B cell (primary cell): ENCODE measurements at regions of chr19 and their contacts with region 1.

Region 1: GRCh38 chr19:35090506-35091237 is 25.0 kb upstream of the FXYD3 start:
- DNase-seq: peak; percentile 78
- ATAC-seq: peak; percentile 68
- H3K4me3 ChIP-seq: peak overlapping the region in 2 of 5 experiments; percentile 15 to 20
- H3K4me3 Mint-ChIP-seq: peak overlapping the region; percentile 70
- H3K27ac ChIP-seq: no peak overlapping the region
- H3K27ac Mint-ChIP-seq: no peak overlapping the region
- H3K4me1 ChIP-seq: peaks cover 50% of the 10 kb centered on the region in 2 donors
- H3K4me1 Mint-ChIP-seq: peaks cover 40% of the 10 kb centered on the region
- H3K27me3 ChIP-seq: no peaks in the 10 kb centered on the region
- H3K27me3 Mint-ChIP-seq: no peaks in the 10 kb centered on the region
- CTCF ChIP-seq: peak; percentile 82

Region 2: GRCh38 chr19:35044317-35045117 is 46.2 kb before region 1 on chr19:
- CTCF ChIA-PET with region 1: interaction called, 9 read pairs
- POLR2A ChIA-PET with region 1: no interaction called
- intact Hi-C with region 1: loop called (anchors 1 kb)
- DNase-seq: peak; percentile 63
- ATAC-seq: no peak
- H3K4me3 ChIP-seq: no peak overlapping the region
- H3K4me3 Mint-ChIP-seq: no peak overlapping the region
- H3K27ac ChIP-seq: no peak overlapping the region
- H3K27ac Mint-ChIP-seq: peak overlapping the region; percentile 32
- H3K4me1 ChIP-seq: peaks cover 27 to 35% of the 10 kb centered on the region in 2 donors
- H3K4me1 Mint-ChIP-seq: peaks cover 35% of the 10 kb centered on the region
- H3K27me3 ChIP-seq: peaks cover 0 to 22% (median 7%) of the 10 kb centered on the region in 4 experiments
- H3K27me3 Mint-ChIP-seq: peaks cover 14% of the 10 kb centered on the region
- CTCF ChIP-seq: peak; percentile 94

Region 3: DNA sequence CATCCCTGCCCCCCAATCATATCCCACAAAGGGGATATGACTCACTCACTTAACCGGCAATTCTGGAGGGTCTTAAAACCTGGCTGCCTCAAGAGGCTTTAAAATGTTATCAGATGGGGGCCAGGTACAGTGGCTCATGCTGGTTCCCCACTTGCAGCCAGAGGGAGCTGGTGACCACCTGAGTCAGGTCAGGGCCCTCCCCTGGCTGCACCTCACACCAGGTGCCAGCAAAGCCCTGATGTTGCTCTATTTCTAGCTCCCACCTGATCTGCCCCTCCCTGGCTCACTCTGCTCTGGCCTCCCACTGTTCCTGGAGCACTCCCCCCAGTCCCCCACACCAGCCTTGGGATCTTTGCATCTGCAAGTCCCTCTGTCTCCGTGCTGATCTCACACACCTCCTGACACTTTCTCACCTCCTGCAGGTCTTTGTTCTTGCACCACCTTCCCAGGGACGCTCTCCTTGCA is 34.9 kb before region 1 on chr19:
- CTCF ChIA-PET with region 1: interaction called, 6 read pairs
- POLR2A ChIA-PET with region 1: no interaction called
- intact Hi-C with region 1: loop called (anchors 5 kb)
- DNase-seq: peak; percentile 43
- ATAC-seq: peak; percentile 51
- H3K4me3 ChIP-seq: no peak overlapping the region
- H3K4me3 Mint-ChIP-seq: no peak overlapping the region
- H3K27ac ChIP-seq: no peak overlapping the region
- H3K27ac Mint-ChIP-seq: no peak overlapping the region
- H3K4me1 ChIP-seq: no peaks in the 10 kb centered on the region
- H3K4me1 Mint-ChIP-seq: no peaks in the 10 kb centered on the region
- H3K27me3 ChIP-seq: no peaks in the 10 kb centered on the region
- H3K27me3 Mint-ChIP-seq: peaks cover 9% of the 10 kb centered on the region
- CTCF ChIP-seq: peak; percentile 24

Region 4: GRCh38 chr19:35124098-35125060 is 33.7 kb after region 1 on chr19:
- CTCF ChIA-PET with region 1: interaction called, 8 read pairs
- POLR2A ChIA-PET with region 1: no interaction called
- intact Hi-C with region 1: loop called (anchors 5 kb)
- DNase-seq: peak; percentile 87
- ATAC-seq: peak; percentile 92
- H3K4me3 ChIP-seq: peak overlapping the region; percentile 37 to 72 (median 59)
- H3K4me3 Mint-ChIP-seq: peak overlapping the region; percentile 96
- H3K27ac ChIP-seq: peak overlapping the region; percentile 22 to 34
- H3K27ac Mint-ChIP-seq: peak overlapping the region; percentile 95
- H3K4me1 ChIP-seq: peaks cover 10 to 17% of the 10 kb centered on the region in 2 donors
- H3K4me1 Mint-ChIP-seq: peaks cover 15% of the 10 kb centered on the region
- H3K27me3 ChIP-seq: no peaks in the 10 kb centered on the region
- H3K27me3 Mint-ChIP-seq: no peaks in the 10 kb centered on the region
- CTCF ChIP-seq: no peak